Esophagus muscularis mucosa (tissue), 4 donors: ENCODE measurements at regions of chr9 and their contacts with region 1.

Region 1: GRCh38 chr9:117782931-117783788 is 79.0 kb downstream of the TLR4 start:
- DNase-seq: no peak
- H3K4me3 ChIP-seq: peak overlapping the region; percentile 47 to 52 (median 50)
- H3K27ac ChIP-seq: peak overlapping the region; percentile 28 to 52 (median 48)
- H3K4me1 ChIP-seq: peaks cover 9 to 23% (median 15%) of the 10 kb centered on the region in 4 donors
- H3K27me3 ChIP-seq: no peaks in the 10 kb centered on the region
- CTCF ChIP-seq: peak; percentile 53 to 71 (median 58)
- EP300 ChIP-seq: no peak
- POLR2A ChIP-seq: no peak

Region 2: GRCh38 chr9:117644133-117644931 is 138.8 kb before region 1 on chr9:
- intact Hi-C with region 1: loop called (anchors 10 kb)
- DNase-seq: peak; percentile 95
- H3K4me3 ChIP-seq: peak overlapping the region; percentile 20 to 54 (median 30)
- H3K27ac ChIP-seq: no peak overlapping the region
- H3K4me1 ChIP-seq: peaks cover 7 to 14% (median 11%) of the 10 kb centered on the region in 4 donors
- H3K27me3 ChIP-seq: peaks cover 0 to 32% (median 1%) of the 10 kb centered on the region in 4 donors
- CTCF ChIP-seq: peak; percentile 88 to 99 (median 93)
- EP300 ChIP-seq: no peak
- POLR2A ChIP-seq: no peak

Region 3: GRCh38 chr9:117916291-117916690 is 133.1 kb after region 1 on chr9:
- intact Hi-C with region 1: no loop called
- DNase-seq: no peak
- H3K4me3 ChIP-seq: no peak overlapping the region
- H3K27ac ChIP-seq: no peak overlapping the region
- H3K4me1 ChIP-seq: no peaks in the 10 kb centered on the region
- H3K27me3 ChIP-seq: no peaks in the 10 kb centered on the region
- CTCF ChIP-seq: no peak
- EP300 ChIP-seq: no peak
- POLR2A ChIP-seq: no peak